Dendritic cell treated with granulocyte-macrophage colony-stimulating factor and Interleukin-4, amounts not matched to agents 40 ng/mL and 50 ng/mL, for 4 days (primary cell): ENCODE measurements at regions of chr21 and their contacts with region 1.

Region 1: GRCh38 chr21:17819114-17819876 is at the start of gene C21orf91:
- H3K4me3 Mint-ChIP-seq: peak within 1 kb of the TSS; percentile 79
- H3K27ac Mint-ChIP-seq: peak within 1 kb of the TSS; percentile 98
- H3K4me1 Mint-ChIP-seq: peaks cover 21% of the 10 kb centered on the region
- H3K27me3 Mint-ChIP-seq: peaks cover 2% of the 10 kb centered on the region

Region 2: GRCh38 chr21:17611414-17612022 is 207.8 kb before region 1 on chr21:
- intact Hi-C with region 1: loop called (anchors 2 kb)
- H3K4me3 Mint-ChIP-seq: peak overlapping the region; percentile 82
- H3K27ac Mint-ChIP-seq: peak overlapping the region; percentile 80
- H3K4me1 Mint-ChIP-seq: peaks cover 15% of the 10 kb centered on the region
- H3K27me3 Mint-ChIP-seq: peaks cover 2% of the 10 kb centered on the region

Region 3: GRCh38 chr21:17644186-17644585 is 175.1 kb before region 1 on chr21:
- intact Hi-C with region 1: no loop called
- H3K4me3 Mint-ChIP-seq: no peak overlapping the region
- H3K27ac Mint-ChIP-seq: no peak overlapping the region
- H3K4me1 Mint-ChIP-seq: no peaks in the 10 kb centered on the region
- H3K27me3 Mint-ChIP-seq: no peaks in the 10 kb centered on the region

Region 4: DNA sequence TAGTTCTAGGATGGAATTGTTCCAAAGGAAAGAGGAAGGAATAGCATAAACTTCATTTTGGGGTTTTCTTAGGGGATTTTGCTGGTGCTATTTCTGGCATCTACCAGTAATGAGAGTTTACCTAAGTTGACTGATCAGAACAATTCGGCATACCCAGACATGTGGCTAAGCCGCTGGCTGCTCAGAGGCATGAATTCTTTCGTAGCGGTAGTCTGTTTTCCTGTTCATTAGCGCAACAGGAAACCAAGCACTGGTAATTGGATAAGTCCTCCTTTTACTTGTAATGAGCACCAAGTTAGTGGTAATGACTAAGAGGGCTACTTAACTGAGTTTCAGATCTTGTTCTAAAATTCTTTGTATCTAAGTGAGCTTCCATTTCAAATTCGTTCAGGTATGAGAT is 38.8 kb before region 1 on chr21:
- intact Hi-C with region 1: loop called (anchors 5 kb)
- H3K4me3 Mint-ChIP-seq: no peak overlapping the region
- H3K27ac Mint-ChIP-seq: no peak overlapping the region
- H3K4me1 Mint-ChIP-seq: peaks cover 60% of the 10 kb centered on the region
- H3K27me3 Mint-ChIP-seq: peaks cover 15% of the 10 kb centered on the region

Region 5: GRCh38 chr21:17793246-17794123 is 25.8 kb before region 1 on chr21:
- intact Hi-C with region 1: loop called (anchors 1 kb)
- H3K4me3 Mint-ChIP-seq: peak overlapping the region; percentile 13
- H3K27ac Mint-ChIP-seq: no peak overlapping the region
- H3K4me1 Mint-ChIP-seq: peaks cover 29% of the 10 kb centered on the region
- H3K27me3 Mint-ChIP-seq: no peaks in the 10 kb centered on the region